Gastrocnemius medialis (tissue), 4 donors: ENCODE measurements at regions of chr3 and their contacts with region 1.

Region 1: DNA sequence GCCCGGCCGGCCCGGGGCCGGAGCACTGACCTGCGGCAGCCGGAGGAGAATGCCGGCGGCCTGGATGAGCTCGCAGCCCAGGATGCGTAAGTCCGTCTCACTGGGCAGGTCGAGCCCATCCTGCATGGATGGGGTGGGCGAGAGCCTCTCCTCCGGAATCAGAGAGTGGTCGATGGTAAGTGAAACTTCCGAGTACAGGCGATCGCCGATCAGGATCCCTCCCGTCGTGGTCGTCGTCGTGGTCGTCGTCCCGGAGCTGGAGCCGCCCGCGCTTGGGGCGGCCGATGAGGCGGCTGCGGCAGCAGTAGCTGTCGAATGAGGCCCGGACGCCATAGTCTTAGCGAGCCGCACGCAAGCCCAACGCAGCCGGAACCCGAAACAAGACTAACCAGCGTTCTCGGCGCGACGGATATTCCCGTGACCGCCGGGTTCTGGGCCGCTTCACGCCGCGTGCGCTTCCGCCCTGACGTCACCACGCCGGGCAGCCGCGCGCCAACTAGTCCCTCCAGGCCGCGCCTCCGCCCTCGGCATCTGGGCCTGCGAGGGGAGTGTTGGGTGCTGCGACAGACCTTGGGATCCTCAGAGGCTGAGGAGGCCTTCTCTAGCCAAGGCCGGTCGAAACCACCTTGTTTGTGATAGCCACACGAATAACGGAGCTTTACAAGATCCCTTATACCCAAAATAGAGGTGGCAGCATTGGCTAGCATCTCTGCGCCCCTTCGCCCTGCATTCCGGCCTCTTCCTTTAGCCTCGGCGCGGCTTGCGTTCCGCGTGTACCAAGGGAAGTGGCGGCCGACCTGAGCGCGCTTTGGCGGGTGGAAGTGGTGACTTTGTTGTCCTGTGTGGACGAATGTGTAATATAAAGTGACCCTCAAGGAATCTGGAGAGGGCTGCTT is at the start of gene CCNL1:
- DNase-seq: peak; percentile 95 to 96
- ATAC-seq: peak; percentile 78 to 82
- H3K4me3 ChIP-seq: peak within 1 kb of the TSS; percentile 79 to 98 (median 94)
- H3K27ac ChIP-seq: peak within 1 kb of the TSS; percentile 93 to 99 (median 98)
- H3K4me1 ChIP-seq: peaks cover 48% of the 10 kb centered on the region in 2 donors
- H3K27me3 ChIP-seq: no peaks in the 10 kb centered on the region
- CTCF ChIP-seq: peak in 2 of 5 experiments; percentile 10 to 11
- POLR2A ChIP-seq: peak; percentile 99
- total RNA-seq, gene CCNL1: 34.3 to 110 (median 41.3) TPM

Region 2: DNA sequence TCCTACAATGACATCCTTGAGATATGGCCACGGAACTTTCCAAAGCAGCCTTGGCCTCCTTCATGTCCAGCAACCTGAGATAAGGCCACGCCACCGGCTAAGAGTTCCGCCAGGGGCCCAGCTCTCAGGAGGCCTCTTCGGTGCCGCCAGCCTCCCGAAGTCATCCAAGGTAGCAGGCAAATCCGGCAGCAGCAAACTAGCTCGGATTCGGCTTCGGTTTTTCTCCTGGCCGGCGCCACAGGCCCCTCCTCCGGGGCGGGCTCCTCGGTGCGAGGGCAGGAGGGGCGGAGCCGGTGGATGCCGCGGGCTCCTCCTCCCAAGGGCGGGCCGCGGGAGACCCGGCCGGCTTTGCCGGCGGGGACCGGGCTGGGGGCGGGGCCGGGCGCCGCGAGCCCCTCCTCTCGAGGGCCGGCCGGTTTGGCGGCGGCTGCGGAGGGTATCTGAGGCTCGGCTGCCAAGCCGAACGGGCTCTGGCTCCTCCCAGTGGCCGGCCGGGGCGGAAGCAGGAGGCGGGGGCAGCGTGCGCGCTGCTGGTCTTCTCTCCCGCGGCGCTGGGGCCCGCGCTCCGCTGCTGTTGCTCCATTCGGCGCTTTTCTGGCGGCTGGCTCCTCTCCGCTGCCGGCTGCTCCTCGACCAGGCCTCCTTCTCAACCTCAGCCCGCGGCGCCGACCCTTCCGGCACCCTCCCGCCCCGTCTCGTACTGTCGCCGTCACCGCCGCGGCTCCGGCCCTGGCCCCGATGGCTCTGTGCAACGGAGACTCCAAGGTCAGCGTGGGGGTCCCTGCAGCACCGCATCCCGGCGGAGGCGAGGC is 1289.7 kb before region 1 on chr3 and contains the start of gene GMPS:
- in situ Hi-C with region 1: loop called in 2 of 4 experiments (anchors 25 kb)
- intact Hi-C with region 1: no loop called
- DNase-seq: peak; percentile 84 to 93
- ATAC-seq: peak; percentile 92
- H3K4me3 ChIP-seq: peak within 1 kb of the TSS; percentile 84 to 99 (median 92)
- H3K27ac ChIP-seq: peak within 1 kb of the TSS; percentile 86 to 97 (median 93)
- H3K4me1 ChIP-seq: peaks cover 21 to 24% of the 10 kb centered on the region in 2 donors
- H3K27me3 ChIP-seq: no peaks in the 10 kb centered on the region
- CTCF ChIP-seq: peak; percentile 50 to 86 (median 74)
- POLR2A ChIP-seq: peak; percentile 72 to 76
- total RNA-seq, gene GMPS: 26.7 to 34.7 (median 32.5) TPM

Region 3: DNA sequence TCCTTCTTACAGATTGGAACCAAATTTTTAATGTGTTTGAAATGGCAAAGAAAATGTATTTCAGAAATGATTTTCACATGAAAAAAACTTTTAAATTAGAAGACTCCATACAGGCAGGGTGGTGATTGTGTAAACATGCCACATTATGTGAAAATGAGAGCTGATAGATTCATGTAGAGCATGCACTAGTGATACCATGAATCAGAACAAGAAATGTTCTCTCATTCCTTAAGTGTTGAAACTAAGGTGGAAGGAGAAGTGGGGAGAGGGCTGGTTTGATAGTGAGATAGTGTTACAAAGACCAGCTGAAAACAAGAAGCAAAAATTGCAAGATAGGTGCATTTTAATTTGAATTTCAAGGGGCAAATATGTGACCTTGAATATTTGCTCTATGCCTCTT is 100.3 kb before region 1 on chr3:
- in situ Hi-C with region 1: no loop called
- intact Hi-C with region 1: no loop called
- DNase-seq: no peak
- ATAC-seq: no peak
- H3K4me3 ChIP-seq: no peak overlapping the region
- H3K27ac ChIP-seq: no peak overlapping the region
- H3K4me1 ChIP-seq: no peaks in the 10 kb centered on the region
- H3K27me3 ChIP-seq: no peaks in the 10 kb centered on the region
- CTCF ChIP-seq: no peak
- POLR2A ChIP-seq: no peak

Region 4: GRCh38 chr3:157088601-157089454 is 71.2 kb before region 1 on chr3:
- in situ Hi-C with region 1: no loop called
- intact Hi-C with region 1: loop called (anchors 2 kb)
- DNase-seq: peak; percentile 94 to 96
- ATAC-seq: peak; percentile 79 to 80
- H3K4me3 ChIP-seq: peak overlapping the region; percentile 77 to 87 (median 82)
- H3K27ac ChIP-seq: peak overlapping the region; percentile 99 to 100 (median 100)
- H3K4me1 ChIP-seq: peaks cover 38 to 44% of the 10 kb centered on the region in 2 donors
- H3K27me3 ChIP-seq: no peaks in the 10 kb centered on the region
- CTCF ChIP-seq: peak in 2 of 5 experiments; percentile 23 to 29
- POLR2A ChIP-seq: peak; percentile 94 to 95

Region 5: DNA sequence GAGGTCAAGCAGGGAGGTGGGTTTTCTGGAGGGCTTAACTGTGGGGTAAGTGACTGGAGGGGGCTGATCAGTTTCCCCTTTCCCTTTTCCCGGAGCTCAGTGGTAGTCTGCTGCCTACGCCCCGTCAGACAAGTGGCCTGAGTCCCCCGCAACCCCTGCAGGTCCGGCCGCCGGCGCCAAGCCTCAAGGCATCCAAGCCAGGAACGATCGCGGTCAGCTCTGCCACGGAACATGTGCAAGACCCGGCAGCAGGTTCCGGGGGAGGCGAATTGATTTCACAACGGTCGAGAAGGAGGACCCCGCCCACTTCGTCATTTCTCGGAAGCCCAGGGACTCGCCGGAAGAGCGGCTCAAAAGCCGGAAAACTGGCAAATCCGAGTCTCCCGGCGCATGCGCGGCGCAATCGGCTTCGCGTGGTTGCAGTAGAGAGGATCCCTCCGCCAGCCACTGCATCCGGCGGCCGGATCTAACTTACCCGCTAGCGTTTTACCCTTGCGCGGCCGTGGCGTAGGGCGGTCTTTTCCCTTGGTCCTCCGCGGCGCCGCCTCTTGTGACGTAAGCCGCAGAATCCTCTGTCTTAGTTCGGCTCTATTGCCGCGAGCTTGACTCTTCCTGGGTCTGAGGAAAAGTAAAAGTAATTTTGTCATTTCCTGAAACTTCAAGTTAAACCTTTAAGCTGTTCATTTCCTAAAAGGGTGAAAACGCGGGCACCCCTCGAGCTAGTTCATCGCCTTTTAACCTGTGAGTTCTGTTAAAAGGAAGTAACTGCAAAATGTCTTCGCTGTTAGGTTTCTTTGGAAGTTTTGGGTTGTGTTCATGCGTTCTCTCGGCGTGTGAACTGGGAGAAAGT is 14.9 kb after region 1 on chr3:
- in situ Hi-C with region 1: no loop called
- intact Hi-C with region 1: loop called (anchors 1 kb)
- DNase-seq: peak; percentile 99
- ATAC-seq: peak; percentile 97
- H3K4me3 ChIP-seq: peak overlapping the region; percentile 70 to 73 (median 72)
- H3K27ac ChIP-seq: peak overlapping the region; percentile 92 to 98 (median 95)
- H3K4me1 ChIP-seq: peaks cover 13 to 14% of the 10 kb centered on the region in 2 donors
- H3K27me3 ChIP-seq: no peaks in the 10 kb centered on the region
- CTCF ChIP-seq: peak in 1 of 5 experiments; percentile 43
- POLR2A ChIP-seq: peak; percentile 89 to 95